Left ventricle myocardium superior (tissue), 1 donor: ENCODE measurements at regions of chr5 and their contacts with region 1.

Region 1: DNA sequence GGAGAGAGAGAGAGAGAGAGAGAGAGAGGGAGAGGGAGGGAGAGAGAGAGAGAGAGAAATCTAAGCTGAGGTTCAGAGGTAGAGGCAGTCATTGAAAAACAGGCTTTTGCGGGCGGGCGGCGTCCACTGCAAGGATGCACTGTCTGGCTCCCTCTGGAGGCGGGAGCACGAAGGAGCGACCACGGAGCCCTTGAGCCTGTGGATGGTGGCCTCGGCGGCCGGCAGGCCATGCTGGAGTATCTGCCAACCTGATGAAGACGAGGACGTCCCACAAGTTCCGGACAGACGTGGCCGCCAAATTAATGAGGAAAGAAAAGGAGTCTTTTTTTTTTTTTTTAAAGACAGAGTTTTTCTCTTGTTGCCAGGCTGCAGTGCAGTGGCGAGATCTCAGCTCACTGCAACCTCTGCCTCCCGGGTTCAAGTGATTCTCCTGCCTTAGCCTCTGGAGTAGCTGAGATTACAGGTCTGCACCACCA is 2.2 kb upstream of the CCDC125 start:
- DNase-seq: peak; percentile 94
- ATAC-seq: peak; percentile 89

Region 2: GRCh38 chr5:69042915-69043658 is 291.7 kb before region 1 on chr5:
- intact Hi-C with region 1: loop called (anchors 5 kb)
- DNase-seq: peak; percentile 32
- ATAC-seq: peak; percentile 96